Activated CD4-positive, alpha-beta T cell treated with anti-CD3 and anti-CD28 coated beads, Interleukin-2, amount 10 ng/mL, durations not matched to agents 24 days and 14 days (primary cell): ENCODE measurements at regions of chr19 and their contacts with region 1.

Region 1: GRCh38 chr19:52189735-52190486 is at the start of gene PPP2R1A:
- DNase-seq: peak; percentile 99
- H3K4me3 Mint-ChIP-seq: peak within 1 kb of the TSS; percentile 97
- H3K27ac Mint-ChIP-seq: peak within 1 kb of the TSS; percentile 99
- H3K4me1 Mint-ChIP-seq: peaks cover 29% of the 10 kb centered on the region
- H3K27me3 Mint-ChIP-seq: no peaks in the 10 kb centered on the region
- total RNA-seq, gene PPP2R1A: 226 and 237 TPM in 2 replicates

Region 2: GRCh38 chr19:51887522-51888498 is 302.1 kb before region 1 on chr19 and contains the start of gene ZNF577:
- intact Hi-C with region 1: no loop called
- DNase-seq: peak; percentile 59
- H3K4me3 Mint-ChIP-seq: peak within 1 kb of the TSS; percentile 34
- H3K27ac Mint-ChIP-seq: no peak within 1 kb of the TSS
- H3K4me1 Mint-ChIP-seq: no peaks in the 10 kb centered on the region
- H3K27me3 Mint-ChIP-seq: no peaks in the 10 kb centered on the region
- total RNA-seq, gene ZNF577: 5.4 and 6.9 TPM in 2 replicates

Region 3: GRCh38 chr19:51904331-51905165 is 285.4 kb before region 1 on chr19 and contains the start of gene ZNF649:
- intact Hi-C with region 1: loop called (anchors 1 kb)
- DNase-seq: peak; percentile 93
- H3K4me3 Mint-ChIP-seq: peak within 1 kb of the TSS; percentile 87
- H3K27ac Mint-ChIP-seq: peak within 1 kb of the TSS; percentile 95
- H3K4me1 Mint-ChIP-seq: peaks cover 11% of the 10 kb centered on the region
- H3K27me3 Mint-ChIP-seq: peaks cover 4% of the 10 kb centered on the region
- total RNA-seq, gene ZNF649: 10.7 and 11.0 TPM in 2 replicates

Region 4: DNA sequence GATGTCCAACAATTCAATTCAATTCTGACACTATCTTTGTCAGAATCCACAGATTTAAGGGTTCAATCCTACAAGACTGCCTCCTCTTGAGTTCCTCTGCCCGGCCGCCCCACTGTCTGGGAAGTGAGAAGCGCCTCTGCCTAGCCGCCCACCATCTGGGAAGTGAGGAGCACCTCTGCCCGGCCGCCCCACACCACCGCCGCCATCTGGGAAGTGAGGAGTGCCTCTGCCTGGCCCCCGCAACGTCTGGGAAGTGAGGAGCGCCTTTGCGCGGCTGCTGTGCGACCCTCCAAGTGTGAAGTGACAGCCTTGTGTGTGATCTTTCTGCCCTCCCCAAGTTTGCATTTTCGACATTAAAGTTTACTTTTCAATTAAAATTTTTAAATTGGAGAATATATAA is 167.7 kb before region 1 on chr19:
- intact Hi-C with region 1: no loop called
- DNase-seq: no peak
- H3K4me3 Mint-ChIP-seq: no peak overlapping the region
- H3K27ac Mint-ChIP-seq: no peak overlapping the region
- H3K4me1 Mint-ChIP-seq: peaks cover 8% of the 10 kb centered on the region
- H3K27me3 Mint-ChIP-seq: no peaks in the 10 kb centered on the region

Region 5: DNA sequence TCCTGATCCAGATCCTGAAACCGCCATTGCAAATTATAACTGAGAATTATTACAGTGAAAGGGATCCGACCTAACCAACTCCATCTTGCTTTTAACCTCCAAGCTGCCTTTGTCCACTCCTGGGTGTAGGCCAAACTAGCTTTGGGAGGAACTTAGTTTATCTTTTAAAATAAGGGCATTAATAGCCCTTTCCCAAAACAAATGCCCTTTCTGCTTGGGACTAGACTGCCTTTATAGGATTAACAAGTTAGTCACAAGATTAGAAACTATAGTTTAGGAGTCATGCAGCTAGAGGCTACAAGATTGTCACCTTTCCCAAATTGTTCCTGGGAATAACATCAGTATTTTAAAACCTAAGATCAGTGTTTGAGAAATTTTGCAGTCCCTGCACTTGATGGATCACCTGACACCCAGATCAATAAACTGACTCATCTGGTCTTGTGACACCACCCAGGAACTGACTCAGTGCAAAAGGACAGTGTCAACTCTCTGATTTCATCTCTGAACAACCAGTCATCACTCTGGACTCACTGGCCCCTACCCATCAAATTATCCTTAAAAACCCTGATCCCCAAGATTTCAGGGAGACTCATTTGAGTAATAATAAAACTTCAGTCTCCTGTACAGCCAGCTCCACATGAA is 90.3 kb before region 1 on chr19:
- intact Hi-C with region 1: no loop called
- DNase-seq: no peak
- H3K4me3 Mint-ChIP-seq: no peak overlapping the region
- H3K27ac Mint-ChIP-seq: no peak overlapping the region
- H3K4me1 Mint-ChIP-seq: peaks cover 5% of the 10 kb centered on the region
- H3K27me3 Mint-ChIP-seq: no peaks in the 10 kb centered on the region

Region 6: GRCh38 chr19:52139252-52140031 is 50.5 kb before region 1 on chr19 and contains the start of gene ZNF616:
- intact Hi-C with region 1: loop called (anchors 1 kb)
- DNase-seq: peak; percentile 99
- H3K4me3 Mint-ChIP-seq: peak within 1 kb of the TSS; percentile 98
- H3K27ac Mint-ChIP-seq: peak within 1 kb of the TSS; percentile 90
- H3K4me1 Mint-ChIP-seq: peaks cover 17% of the 10 kb centered on the region
- H3K27me3 Mint-ChIP-seq: no peaks in the 10 kb centered on the region
- total RNA-seq, gene ZNF616: 6.1 and 7.1 TPM in 2 replicates

Region 7: GRCh38 chr19:52211926-52212571 is 22.1 kb after region 1 on chr19:
- intact Hi-C with region 1: no loop called
- DNase-seq: no peak
- H3K4me3 Mint-ChIP-seq: no peak overlapping the region
- H3K27ac Mint-ChIP-seq: no peak overlapping the region
- H3K4me1 Mint-ChIP-seq: no peaks in the 10 kb centered on the region
- H3K27me3 Mint-ChIP-seq: no peaks in the 10 kb centered on the region

Region 8: GRCh38 chr19:52227196-52227940 is 37.5 kb after region 1 on chr19:
- intact Hi-C with region 1: loop called (anchors 5 kb)
- DNase-seq: no peak
- H3K4me3 Mint-ChIP-seq: no peak overlapping the region
- H3K27ac Mint-ChIP-seq: peak overlapping the region; percentile 31
- H3K4me1 Mint-ChIP-seq: peaks cover 10% of the 10 kb centered on the region
- H3K27me3 Mint-ChIP-seq: no peaks in the 10 kb centered on the region